ENCODE measurements at regions of chr10 and their contacts with region 1.

Region 1: GRCh38 chr10:63083904-63084689 is 49.0 kb upstream of the NRBF2 start:
- DNase-seq: peak in 6 of 10 donors; percentile 21 to 91 (median 41)

Region 2: DNA sequence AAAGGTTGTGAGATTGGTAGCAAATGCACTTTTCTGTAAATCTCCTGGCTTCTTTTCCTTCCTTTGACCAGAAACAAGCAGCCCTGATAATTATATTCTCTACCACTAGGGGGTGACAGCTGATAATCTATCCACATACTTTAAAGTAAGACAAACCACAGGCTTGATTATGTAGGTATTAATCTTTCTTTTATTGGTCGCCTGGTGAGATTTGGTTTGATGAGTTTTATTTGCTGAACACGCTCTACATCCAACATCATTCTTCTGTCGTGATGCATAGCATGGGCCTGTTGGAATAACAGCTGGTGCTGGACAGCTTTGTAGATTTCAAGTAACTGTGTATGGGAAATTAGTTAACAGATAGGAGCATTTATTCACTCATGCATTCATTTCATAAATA is 646.4 kb before region 1 on chr10:
- intact Hi-C with region 1: loop called (anchors 10 kb)
- DNase-seq: no peak

Region 3: DNA sequence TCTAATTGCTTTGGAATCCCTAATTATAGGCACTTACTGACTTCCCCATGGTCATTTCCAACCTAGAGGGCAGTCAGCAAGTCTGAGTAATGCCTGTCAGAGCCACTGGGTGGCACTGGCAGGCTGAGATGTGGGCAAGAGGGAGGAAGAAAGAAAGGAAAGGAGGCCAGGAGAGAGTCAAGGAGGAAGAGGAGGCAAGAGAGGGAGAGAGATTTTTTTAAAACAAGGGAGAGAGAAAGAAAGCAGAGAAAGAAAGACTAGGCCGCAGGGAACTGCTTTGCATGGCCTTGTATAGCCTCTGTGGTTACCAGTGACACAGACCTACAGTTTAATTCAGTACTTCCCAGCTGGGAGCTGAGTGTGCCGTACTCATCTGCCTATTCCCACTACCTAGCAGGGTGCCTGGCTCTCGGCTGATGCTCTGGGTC is 490.0 kb before region 1 on chr10:
- intact Hi-C with region 1: loop called (anchors 5 kb)
- DNase-seq: peak in 8 of 10 donors; percentile 53 to 94 (median 62)

Region 4: GRCh38 chr10:62972103-62972502 is 112.0 kb before region 1 on chr10:
- intact Hi-C with region 1: no loop called
- DNase-seq: no peak

Region 5: GRCh38 chr10:63042256-63042655 is 41.8 kb before region 1 on chr10:
- intact Hi-C with region 1: no loop called
- DNase-seq: no peak

Measured in posterior cingulate gyrus (tissue), 11 donors.